Mammary epithelial cell (primary cell): ENCODE measurements at regions of chr4 and their contacts with region 1.

Region 1: DNA sequence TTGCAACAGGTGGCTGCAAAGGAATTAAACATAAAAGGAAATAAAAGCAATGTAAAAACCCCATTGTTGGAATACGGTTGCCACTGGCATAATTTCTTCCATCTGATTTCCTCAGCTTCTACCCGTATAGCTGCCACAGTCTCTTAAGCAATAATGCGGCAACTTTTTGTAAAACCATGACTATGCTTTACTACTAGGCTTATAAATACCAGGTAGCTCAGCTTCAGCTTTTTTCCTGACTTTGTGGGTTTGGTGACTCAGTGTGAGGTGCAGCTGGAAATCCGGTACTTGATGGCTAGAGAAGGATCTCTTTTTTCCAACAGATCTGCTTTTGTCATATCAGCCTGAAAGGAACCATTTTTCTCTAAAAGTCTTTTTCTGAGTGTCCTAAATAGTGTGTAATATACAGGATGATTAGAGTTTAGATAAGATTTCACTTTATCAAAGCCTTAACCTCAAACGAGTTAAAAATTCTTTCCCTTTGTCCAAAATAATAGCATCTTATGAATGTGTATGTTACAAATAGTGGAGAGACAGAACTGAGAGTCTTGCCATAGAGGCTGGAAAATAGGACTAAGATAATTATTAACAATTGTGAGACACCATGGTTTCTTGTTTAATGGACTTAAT is 268.1 kb downstream of the ADGRL3 start:
- DNase-seq: peak; percentile 94
- H3K4me3 ChIP-seq: no peak overlapping the region
- H3K27ac ChIP-seq: peak overlapping the region; percentile 63
- H3K4me1 ChIP-seq: peaks cover 32% of the 10 kb centered on the region
- H3K27me3 ChIP-seq: no peaks in the 10 kb centered on the region
- CTCF ChIP-seq: no peak

Region 2: DNA sequence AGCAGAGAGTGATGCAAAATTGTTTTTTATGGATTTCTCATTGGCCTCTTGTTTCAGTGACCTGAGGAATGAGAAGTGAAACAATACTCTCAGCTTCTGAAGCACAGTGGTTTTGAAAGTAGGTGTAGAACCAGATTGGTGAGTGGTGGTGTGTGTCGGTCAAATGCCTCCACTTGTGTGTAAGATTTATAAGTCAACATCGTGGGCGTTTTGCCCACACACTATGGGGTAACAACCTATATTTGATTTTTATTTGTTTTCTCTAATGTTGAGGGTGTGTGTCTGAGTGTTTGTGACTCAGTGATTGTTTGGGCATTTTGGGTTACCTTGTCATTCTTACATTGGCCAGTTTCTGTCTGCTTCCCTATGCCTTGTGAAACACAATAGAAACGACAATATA is 244.8 kb before region 1 on chr4:
- CTCF ChIA-PET with region 1: interaction called, 19 read pairs
- dilution Hi-C with region 1: no loop called
- in situ Hi-C with region 1: no loop called
- intact Hi-C with region 1: no loop called
- DNase-seq: peak; percentile 11
- H3K4me3 ChIP-seq: no peak overlapping the region
- H3K27ac ChIP-seq: no peak overlapping the region
- H3K4me1 ChIP-seq: no peaks in the 10 kb centered on the region
- H3K27me3 ChIP-seq: no peaks in the 10 kb centered on the region
- CTCF ChIP-seq: no peak

Region 3: GRCh38 chr4:61520681-61521160 is 52.5 kb after region 1 on chr4:
- CTCF ChIA-PET with region 1: no interaction called
- dilution Hi-C with region 1: no loop called
- in situ Hi-C with region 1: no loop called
- intact Hi-C with region 1: loop called (anchors 5 kb)
- DNase-seq: peak; percentile 56
- H3K4me3 ChIP-seq: no peak overlapping the region
- H3K27ac ChIP-seq: no peak overlapping the region
- H3K4me1 ChIP-seq: no peaks in the 10 kb centered on the region
- H3K27me3 ChIP-seq: no peaks in the 10 kb centered on the region
- CTCF ChIP-seq: no peak